HAP-1 (cell line): ENCODE measurements at regions of chr1 and their contacts with region 1.

Region 1: DNA sequence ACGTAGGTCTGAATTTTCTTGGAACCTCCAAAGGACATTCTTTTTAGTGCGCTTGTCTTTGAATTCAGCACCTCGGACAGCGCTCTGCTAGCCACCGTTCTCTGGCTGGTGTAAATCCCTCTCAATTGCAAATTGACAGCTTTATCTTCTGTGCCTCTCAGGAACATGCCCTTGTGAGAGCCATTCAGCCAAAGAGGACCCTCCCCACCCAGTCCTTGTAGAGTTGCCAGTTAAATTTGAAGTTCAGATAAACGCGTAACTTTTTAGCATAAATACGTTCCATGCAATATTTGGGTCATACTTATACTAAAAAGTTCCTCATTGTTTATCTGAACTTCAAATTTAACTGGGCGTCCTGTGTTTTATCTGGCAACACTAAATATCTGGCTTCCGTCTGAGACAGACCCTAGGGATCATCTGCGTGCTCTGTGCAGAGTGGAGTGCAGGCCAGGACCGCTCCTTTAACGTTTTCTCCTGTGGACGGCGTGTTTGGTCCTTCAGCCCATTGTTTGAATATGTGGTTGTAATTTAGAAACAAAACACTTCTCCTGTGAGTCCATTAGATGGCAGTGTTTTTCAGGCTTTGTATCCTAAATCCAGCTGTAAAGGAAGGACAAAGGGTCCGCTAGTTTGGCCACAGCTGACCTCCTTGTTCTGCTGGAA is 7.0 kb downstream of the KCNAB2 start:
- DNase-seq: peak; percentile 77 to 91
- H3K4me3 ChIP-seq: no peak overlapping the region
- H3K4me1 ChIP-seq: no peaks in the 10 kb centered on the region
- H3K27me3 ChIP-seq: no peaks in the 10 kb centered on the region

Region 2: GRCh38 chr1:6171548-6172119 is 119.0 kb after region 1 on chr1:
- in situ Hi-C with region 1: loop called (anchors 10 kb)
- DNase-seq: no peak
- H3K4me3 ChIP-seq: no peak overlapping the region
- H3K4me1 ChIP-seq: no peaks in the 10 kb centered on the region
- H3K27me3 ChIP-seq: peaks cover 22% of the 10 kb centered on the region